ENCODE measurements at regions of chr15 and their contacts with region 1.

Region 1: GRCh38 chr15:78750566-78750965 is 60.7 kb downstream of the ADAMTS7 start:
- DNase-seq: peak in 2 of 5 donors; percentile 32 to 40
- ATAC-seq: peak; percentile 58 to 68 (median 64)
- H3K4me3 ChIP-seq: peak overlapping the region in 9 of 12 donors; percentile 8 to 46 (median 34)
- H3K27ac ChIP-seq: peak overlapping the region in 10 of 12 donors; percentile 7 to 82 (median 77)
- H3K4me1 ChIP-seq: peaks cover 0 to 37% (median 9%) of the 10 kb centered on the region in 12 donors
- H3K27me3 ChIP-seq: no peaks in the 10 kb centered on the region
- CTCF ChIP-seq: no peak
- POLR2A ChIP-seq: no peak

Region 2: DNA sequence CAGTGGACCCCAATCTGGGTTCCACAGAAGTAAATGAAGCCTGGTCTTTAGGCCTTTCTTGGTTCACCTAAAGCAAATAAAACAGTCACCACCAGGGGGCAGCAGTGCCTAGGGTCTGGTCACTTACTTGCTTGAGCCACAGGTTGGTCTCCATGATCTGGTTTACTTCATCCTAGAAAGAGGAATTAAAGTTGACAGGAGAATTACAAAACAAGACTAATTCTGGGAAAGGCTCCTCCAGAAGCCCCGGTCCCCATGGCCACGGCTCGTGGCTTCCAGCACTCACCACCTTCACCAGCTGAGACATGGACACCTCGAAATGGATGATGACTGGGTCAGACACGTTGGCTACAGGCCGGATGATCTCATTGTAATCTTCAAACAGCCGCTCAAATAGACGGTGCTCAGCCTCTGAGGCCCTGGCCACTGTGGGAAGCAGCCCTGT is 132.1 kb before region 1 on chr15:
- intact Hi-C with region 1: loop called in 4 of 10 experiments (anchors 2 to 5 kb)
- DNase-seq: peak; percentile 82 to 87 (median 84)
- ATAC-seq: peak; percentile 75 to 83 (median 80)
- H3K4me3 ChIP-seq: no peak overlapping the region
- H3K27ac ChIP-seq: peak overlapping the region in 1 of 12 donors; percentile 23
- H3K4me1 ChIP-seq: peaks cover 0 to 31% (median 13%) of the 10 kb centered on the region in 12 donors
- H3K27me3 ChIP-seq: peaks cover 19 to 48% (median 28%) of the 10 kb centered on the region in 9 donors
- CTCF ChIP-seq: peak; percentile 74 to 93 (median 88)
- POLR2A ChIP-seq: no peak

Measured in heart left ventricle (tissue), 16 donors.